Left ventricle myocardium superior (tissue), 1 donor: ENCODE measurements at regions of chr4 and their contacts with region 1.

Region 1: GRCh38 chr4:37603070-37603468 is 83.1 kb downstream of the RELL1 start:
- DNase-seq: peak; percentile 89
- ATAC-seq: peak; percentile 97

Region 2: DNA sequence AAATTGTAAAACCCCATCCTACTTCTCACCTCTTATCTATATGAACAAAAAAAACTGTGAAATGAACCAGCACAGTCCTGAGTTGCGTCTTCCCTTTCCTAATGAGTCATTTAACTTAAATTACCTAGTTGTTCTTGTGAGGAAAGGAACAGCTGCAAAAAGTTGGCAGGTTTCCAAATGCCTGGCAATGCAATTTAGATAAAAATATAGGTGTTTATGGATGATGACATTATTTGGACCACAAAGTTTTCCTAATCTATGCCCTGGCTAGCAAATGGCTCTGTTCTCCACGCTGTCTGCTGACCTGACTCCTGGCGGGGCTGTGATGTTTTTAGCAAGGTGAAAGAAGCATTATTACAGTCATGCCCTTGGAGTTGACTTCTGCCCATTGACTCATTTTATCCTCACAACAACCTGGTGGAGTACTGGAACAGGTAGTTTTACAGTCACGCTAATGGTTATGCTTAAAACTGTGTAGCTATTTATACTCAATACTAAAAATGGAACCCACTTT is 112.9 kb after region 1 on chr4:
- intact Hi-C with region 1: no loop called
- DNase-seq: no peak
- ATAC-seq: peak; percentile 85

Region 3: DNA sequence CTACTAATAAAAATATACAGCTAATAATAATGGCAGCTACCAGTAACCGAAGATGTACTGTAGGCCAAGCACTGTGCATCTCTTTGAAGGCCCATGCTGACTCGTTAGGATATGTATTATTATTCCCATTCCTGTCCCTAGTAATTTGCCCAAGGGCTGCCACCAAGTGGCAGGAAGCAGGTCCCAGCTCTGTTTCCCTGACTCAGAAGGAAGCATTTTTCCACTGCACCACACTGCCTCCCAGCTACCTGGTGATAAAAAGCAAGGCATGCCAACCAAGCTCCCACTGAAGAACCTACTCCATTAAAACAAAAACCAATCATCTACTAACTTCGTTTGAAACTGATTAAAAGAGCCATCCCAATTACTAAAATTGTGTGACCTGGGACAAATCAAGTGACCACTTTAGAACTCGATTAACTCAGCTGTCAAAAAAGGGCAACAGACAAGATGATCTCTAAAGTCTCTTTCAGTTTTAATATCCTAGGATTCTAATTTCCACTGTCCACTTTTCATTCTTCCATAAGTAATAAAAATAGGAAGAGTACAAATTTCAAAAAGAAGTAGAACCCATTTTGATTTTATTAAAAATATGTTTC is 199.1 kb after region 1 on chr4:
- intact Hi-C with region 1: loop called (anchors 5 kb)
- DNase-seq: peak; percentile 51
- ATAC-seq: peak; percentile 89